HEK293 (cell line): ENCODE measurements at regions of chr2 and their contacts with region 1.

Region 1: DNA sequence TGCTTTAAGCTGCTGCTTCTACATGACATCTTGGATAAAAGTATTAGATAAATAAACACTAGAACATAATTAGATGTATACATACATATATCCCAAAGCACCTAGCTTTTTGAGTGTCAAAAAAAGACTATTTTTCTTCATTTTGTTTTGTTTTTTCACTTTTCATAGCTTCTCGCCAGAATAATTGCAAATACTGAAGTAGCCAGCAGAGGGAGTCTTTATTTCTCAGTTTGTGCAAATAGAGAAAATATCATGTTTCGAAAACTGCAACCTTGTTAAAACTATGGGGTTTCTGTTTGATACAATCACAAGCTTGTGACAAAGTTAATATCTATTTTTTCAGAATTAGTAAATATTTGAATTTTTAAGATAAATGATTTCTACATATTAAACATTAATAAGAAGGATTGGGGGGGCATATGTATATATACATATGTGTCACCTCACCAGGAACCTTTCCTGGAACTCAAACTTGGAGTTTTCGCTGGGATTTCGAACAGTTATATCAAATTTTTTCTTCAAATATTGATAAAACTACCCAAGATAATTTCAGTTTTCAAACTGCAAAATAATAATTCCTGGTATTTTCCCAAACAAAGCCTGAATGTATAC is 61.0 kb downstream of the GRB14 start:
- H3K4me3 ChIP-seq: no peak overlapping the region
- H3K27ac ChIP-seq: no peak overlapping the region
- H3K4me1 ChIP-seq: no peaks in the 10 kb centered on the region; the same call in 1 of the 2 replicates
- CTCF ChIP-seq: no peak

Region 2: GRCh38 chr2:164447660-164448059 is 112.6 kb before region 1 on chr2:
- CTCF ChIA-PET with region 1: no interaction called
- POLR2A ChIA-PET with region 1: no interaction called
- H3K4me3 ChIP-seq: no peak overlapping the region
- H3K27ac ChIP-seq: no peak overlapping the region
- H3K4me1 ChIP-seq: no peaks in the 10 kb centered on the region
- CTCF ChIP-seq: no peak

Region 3: DNA sequence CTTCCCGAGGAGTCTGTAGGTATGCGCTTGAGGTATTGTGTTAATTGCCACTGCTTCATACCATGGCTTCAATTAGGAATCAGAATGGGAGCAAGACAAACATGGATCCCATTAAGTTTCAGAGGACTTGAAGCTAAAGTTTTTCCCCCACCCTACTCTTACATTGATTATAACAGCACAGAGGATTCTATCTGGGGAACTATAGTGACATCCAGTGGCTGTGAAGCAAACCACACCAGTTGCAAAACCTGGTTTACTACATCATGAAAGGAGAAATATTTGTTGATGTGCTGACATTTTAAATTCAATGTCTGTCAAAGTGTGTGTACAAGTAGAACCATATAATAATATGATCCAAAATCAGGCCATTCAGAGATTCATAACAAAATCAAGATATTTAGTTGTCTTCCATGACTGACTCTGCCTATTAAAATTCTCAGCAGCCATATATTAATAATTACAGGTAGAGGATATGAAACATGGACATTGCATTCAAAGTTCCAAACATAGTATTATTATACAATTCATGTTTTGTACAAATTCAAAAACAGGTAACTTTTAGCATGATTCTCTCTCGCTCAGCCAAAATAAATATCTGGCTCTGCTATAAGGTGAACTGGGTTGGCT is 21.9 kb before region 1 on chr2:
- CTCF ChIA-PET with region 1: interaction called, 12 read pairs
- POLR2A ChIA-PET with region 1: no interaction called
- H3K4me3 ChIP-seq: no peak overlapping the region
- H3K27ac ChIP-seq: no peak overlapping the region
- H3K4me1 ChIP-seq: peaks cover 8% of the 10 kb centered on the region; the same call in 1 of the 2 replicates
- CTCF ChIP-seq: peak; percentile 37; the same call in 1 of the 2 replicates

Region 4: GRCh38 chr2:164574925-164575324 is 14.6 kb after region 1 on chr2:
- CTCF ChIA-PET with region 1: interaction called, 18 read pairs
- POLR2A ChIA-PET with region 1: no interaction called
- H3K4me3 ChIP-seq: no peak overlapping the region
- H3K27ac ChIP-seq: no peak overlapping the region
- H3K4me1 ChIP-seq: no peaks in the 10 kb centered on the region
- CTCF ChIP-seq: no peak

Region 5: DNA sequence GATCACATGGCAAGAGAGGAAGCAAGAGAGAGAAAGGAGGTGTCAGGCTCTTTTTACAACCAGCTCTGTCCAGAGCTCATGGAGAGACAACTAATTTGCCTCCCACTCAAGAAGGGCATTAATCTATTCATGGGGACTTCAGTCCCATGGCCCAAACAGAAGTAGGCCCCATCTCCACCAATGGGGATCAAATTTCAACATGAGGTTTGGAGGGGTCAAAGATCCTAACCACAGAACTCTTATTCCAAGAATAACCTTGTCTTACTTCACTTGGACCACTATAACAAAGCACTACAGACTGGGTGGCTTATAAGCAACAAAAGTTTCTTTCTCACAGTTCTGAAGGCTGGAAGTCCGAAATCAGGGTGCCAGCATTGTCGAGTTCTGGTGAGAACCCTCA is 29.2 kb after region 1 on chr2:
- CTCF ChIA-PET with region 1: interaction called, 10 read pairs
- POLR2A ChIA-PET with region 1: no interaction called
- H3K4me3 ChIP-seq: no peak overlapping the region
- H3K27ac ChIP-seq: no peak overlapping the region
- H3K4me1 ChIP-seq: peaks cover 4% of the 10 kb centered on the region
- CTCF ChIP-seq: no peak

Region 6: DNA sequence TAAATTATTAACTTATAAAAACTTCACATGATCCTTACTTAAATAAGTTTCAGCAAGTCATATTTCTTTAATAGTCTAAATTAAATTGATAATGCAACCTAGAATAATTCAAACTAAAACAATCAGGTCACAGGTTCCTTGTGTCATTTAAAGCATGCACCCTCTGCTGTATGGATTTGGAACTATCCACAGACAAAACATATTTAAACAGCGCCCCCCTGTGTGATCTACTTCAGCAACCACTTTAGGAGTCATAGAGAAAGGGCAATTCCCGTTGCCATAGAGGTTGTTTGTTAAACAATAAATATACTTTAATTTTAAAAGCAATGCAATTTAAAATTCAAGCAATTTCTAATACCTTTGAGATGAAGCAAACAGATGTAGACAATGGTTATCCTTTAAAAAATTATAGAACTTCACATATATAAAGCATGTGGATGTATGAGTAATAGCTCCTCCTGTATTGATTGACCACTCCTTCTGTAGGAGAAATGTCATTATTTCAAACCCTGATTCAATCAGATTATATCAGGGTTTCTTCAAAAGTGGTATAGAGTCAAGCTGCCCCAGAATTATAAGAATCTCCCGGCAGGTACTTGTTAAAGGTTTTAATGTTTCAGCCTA is 39.8 kb after region 1 on chr2:
- CTCF ChIA-PET with region 1: interaction called, 67 read pairs
- POLR2A ChIA-PET with region 1: no interaction called
- H3K4me3 ChIP-seq: no peak overlapping the region
- H3K27ac ChIP-seq: no peak overlapping the region
- H3K4me1 ChIP-seq: no peaks in the 10 kb centered on the region
- CTCF ChIP-seq: peak; percentile 66

Region 7: GRCh38 chr2:164717000-164717803 is 156.9 kb after region 1 on chr2:
- CTCF ChIA-PET with region 1: interaction called, 14 read pairs
- POLR2A ChIA-PET with region 1: no interaction called
- H3K4me3 ChIP-seq: no peak overlapping the region
- H3K27ac ChIP-seq: no peak overlapping the region
- H3K4me1 ChIP-seq: no peaks in the 10 kb centered on the region
- CTCF ChIP-seq: no peak